Activated CD8-positive, alpha-beta T cell treated with anti-CD3 and anti-CD28 coated beads for 36 hours (primary cell): ENCODE measurements at regions of chr10 and their contacts with region 1.

Region 1: DNA sequence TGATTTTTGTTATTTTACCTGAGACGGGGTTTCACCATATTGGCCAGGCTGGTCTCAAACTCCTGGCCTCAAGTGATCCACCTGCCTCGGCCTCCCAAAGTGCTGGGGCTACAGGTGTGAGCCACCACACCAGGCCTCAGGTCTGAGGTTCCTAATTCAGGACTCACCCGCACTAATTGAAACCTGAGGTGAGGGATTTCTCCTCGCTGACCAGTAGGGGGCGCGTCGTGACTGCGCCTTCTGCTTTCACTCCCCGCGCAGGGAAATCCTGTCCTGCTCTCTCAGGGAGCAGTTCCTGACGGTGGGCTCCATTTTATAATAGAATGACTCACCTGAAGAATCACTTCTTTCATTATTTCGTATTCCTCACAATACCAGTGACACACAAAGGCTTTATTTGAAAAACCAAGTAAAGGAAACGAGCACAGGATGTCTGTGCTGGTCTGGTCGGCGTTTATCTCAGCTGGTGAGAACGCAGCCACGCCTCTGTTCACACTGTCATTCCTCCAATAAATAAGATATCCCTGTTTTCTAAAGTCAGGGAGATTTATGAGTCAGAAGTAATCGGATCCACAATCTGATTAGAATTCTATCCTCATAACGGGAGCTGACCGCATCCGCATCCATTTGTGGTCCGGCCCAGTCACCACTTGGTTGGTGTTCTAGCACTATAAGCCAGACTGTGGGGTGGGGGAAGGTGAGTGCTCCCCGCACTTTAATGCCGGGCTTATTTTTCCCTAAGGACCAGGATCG is 35.4 kb downstream of the BAG3 start:
- DNase-seq: peak; percentile 86
- ATAC-seq: peak; percentile 89
- H3K4me3 Mint-ChIP-seq: peak overlapping the region; percentile 21
- H3K27ac Mint-ChIP-seq: peak overlapping the region; percentile 77
- H3K4me1 Mint-ChIP-seq: peaks cover 20% of the 10 kb centered on the region
- H3K27me3 Mint-ChIP-seq: no peaks in the 10 kb centered on the region
- CTCF ChIP-seq: peak; percentile 98

Region 2: GRCh38 chr10:119705434-119705831 is 18.8 kb after region 1 on chr10:
- CTCF ChIA-PET with region 1: interaction called, 58 read pairs
- POLR2A ChIA-PET with region 1: interaction called, 8 read pairs
- intact Hi-C with region 1: loop called (anchors 2 kb)
- DNase-seq: peak; percentile 26
- ATAC-seq: peak; percentile 53
- H3K4me3 Mint-ChIP-seq: peak overlapping the region; percentile 43
- H3K27ac Mint-ChIP-seq: peak overlapping the region; percentile 97
- H3K4me1 Mint-ChIP-seq: peaks cover 78% of the 10 kb centered on the region
- H3K27me3 Mint-ChIP-seq: no peaks in the 10 kb centered on the region
- CTCF ChIP-seq: no peak

Region 3: DNA sequence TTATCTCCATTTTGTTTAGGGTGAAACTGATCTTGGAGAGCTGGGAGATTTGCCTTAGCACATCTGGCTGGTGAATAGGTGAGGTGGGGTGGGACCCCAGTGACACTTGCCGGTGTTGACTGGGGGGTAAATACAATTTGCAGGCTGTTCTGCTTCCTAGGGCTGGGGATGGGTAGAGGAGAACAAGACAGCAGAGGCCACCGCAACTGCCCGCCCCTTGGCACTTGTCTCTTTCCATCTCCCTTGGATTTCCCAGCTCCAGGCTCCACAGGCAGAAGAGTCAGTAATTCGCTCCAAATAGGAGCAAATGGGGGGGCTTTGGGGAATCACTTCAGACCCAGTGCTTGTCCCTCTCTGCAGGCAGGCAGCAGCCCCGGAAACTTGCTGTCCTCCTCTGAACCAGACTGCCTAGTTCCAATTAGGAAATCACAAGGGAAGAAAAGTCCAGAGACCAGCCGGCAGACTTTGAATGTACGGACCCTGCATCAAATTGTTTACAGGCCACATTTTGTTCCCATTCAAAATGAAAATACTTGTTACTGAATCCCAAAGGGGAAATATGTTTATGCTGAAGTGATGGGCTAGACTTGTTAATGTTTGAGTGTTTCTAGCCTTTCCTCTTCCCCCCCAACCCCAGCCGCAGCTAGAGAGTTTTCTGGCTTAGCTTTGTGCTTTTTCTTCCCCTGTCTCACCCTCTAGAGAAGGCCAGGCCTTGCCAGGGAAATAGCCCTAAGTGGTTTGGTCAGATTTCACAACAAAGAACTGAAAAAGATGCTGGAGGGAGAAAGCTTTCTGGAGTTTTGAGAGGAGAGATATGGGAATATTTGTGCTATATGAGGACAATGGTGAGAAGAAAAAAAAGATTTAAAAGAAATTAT is 29.3 kb after region 1 on chr10:
- CTCF ChIA-PET with region 1: interaction called, 11 read pairs
- POLR2A ChIA-PET with region 1: interaction called, 3 read pairs
- intact Hi-C with region 1: no loop called
- DNase-seq: no peak
- ATAC-seq: no peak
- H3K4me3 Mint-ChIP-seq: no peak overlapping the region
- H3K27ac Mint-ChIP-seq: no peak overlapping the region
- H3K4me1 Mint-ChIP-seq: peaks cover 7% of the 10 kb centered on the region
- H3K27me3 Mint-ChIP-seq: no peaks in the 10 kb centered on the region
- CTCF ChIP-seq: no peak

Region 4: GRCh38 chr10:119725828-119726675 is 39.4 kb after region 1 on chr10 and contains the start of gene INPP5F:
- CTCF ChIA-PET with region 1: interaction called, 26 read pairs
- POLR2A ChIA-PET with region 1: interaction called, 4 read pairs
- intact Hi-C with region 1: loop called (anchors 5 kb)
- DNase-seq: peak; percentile 99
- ATAC-seq: peak; percentile 98
- H3K4me3 Mint-ChIP-seq: peak within 1 kb of the TSS; percentile 82
- H3K27ac Mint-ChIP-seq: peak within 1 kb of the TSS; percentile 76
- H3K4me1 Mint-ChIP-seq: peaks cover 41% of the 10 kb centered on the region
- H3K27me3 Mint-ChIP-seq: no peaks in the 10 kb centered on the region
- CTCF ChIP-seq: peak; percentile 43
- total RNA-seq, gene INPP5F: 10.7 TPM

Region 5: GRCh38 chr10:119807960-119808697 is 121.5 kb after region 1 on chr10:
- CTCF ChIA-PET with region 1: interaction called, 12 read pairs
- POLR2A ChIA-PET with region 1: no interaction called
- intact Hi-C with region 1: no loop called
- DNase-seq: peak; percentile 12
- ATAC-seq: peak; percentile 58
- H3K4me3 Mint-ChIP-seq: no peak overlapping the region
- H3K27ac Mint-ChIP-seq: peak overlapping the region; percentile 3
- H3K4me1 Mint-ChIP-seq: peaks cover 3% of the 10 kb centered on the region
- H3K27me3 Mint-ChIP-seq: no peaks in the 10 kb centered on the region
- CTCF ChIP-seq: no peak

Region 6: GRCh38 chr10:119834188-119834587 is 147.6 kb after region 1 on chr10:
- CTCF ChIA-PET with region 1: interaction called, 9 read pairs
- POLR2A ChIA-PET with region 1: no interaction called
- intact Hi-C with region 1: loop called (anchors 10 kb)
- DNase-seq: peak; percentile 16
- ATAC-seq: peak; percentile 82
- H3K4me3 Mint-ChIP-seq: no peak overlapping the region
- H3K27ac Mint-ChIP-seq: peak overlapping the region; percentile 50
- H3K4me1 Mint-ChIP-seq: peaks cover 27% of the 10 kb centered on the region
- H3K27me3 Mint-ChIP-seq: no peaks in the 10 kb centered on the region
- CTCF ChIP-seq: no peak